ENCODE measurements at regions of chr16 and their contacts with region 1.

Region 1: GRCh38 chr16:2838928-2839327 is 8.8 kb downstream of the ZG16B start:
- DNase-seq: peak; percentile 48
- H3K4me3 Mint-ChIP-seq: no peak overlapping the region
- H3K27ac Mint-ChIP-seq: no peak overlapping the region
- H3K4me1 Mint-ChIP-seq: peaks cover 20% of the 10 kb centered on the region
- H3K27me3 Mint-ChIP-seq: peaks cover 3% of the 10 kb centered on the region

Region 2: DNA sequence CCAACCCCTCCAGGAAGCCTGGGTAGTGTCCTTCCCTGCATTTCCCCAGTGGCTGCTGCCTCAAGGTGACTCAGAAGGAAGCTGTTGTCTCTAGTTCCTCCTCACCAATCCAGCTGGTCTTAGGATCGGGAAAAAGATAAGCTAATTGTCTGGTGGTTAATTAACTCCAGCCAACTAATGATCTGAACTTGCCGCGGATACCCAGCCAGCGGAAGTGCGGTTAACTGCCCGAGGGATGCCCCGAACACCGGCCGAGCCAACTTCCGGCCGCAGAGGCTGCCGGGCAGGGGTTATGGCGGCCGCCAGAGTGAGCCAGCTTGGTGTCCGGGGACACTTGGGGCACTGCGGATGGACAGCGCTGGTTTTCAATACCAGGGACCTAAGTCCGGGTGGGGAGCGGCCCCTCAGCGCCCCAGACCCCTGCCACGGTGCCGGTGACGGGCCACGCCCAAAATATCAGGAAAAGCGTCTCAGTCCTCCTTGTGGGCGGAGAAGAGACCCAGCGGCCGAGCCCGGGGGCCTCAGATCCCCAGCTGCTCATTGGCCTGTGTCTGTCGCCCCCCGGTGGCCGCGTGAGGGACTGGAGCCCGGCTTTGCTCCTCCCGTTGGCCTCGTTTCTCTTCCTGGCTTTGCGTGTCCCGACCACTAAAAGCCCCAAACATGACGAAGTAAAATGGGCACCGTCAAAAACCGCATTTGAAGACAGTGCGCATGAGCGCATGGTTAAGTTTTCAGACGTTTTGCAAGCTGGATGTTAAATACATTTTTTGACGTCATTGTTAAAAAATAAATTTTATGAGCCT is 29.3 kb after region 1 on chr16:
- intact Hi-C with region 1: loop called (anchors 1 kb)
- DNase-seq: peak; percentile 90
- H3K4me3 Mint-ChIP-seq: peak overlapping the region; percentile 91
- H3K27ac Mint-ChIP-seq: peak overlapping the region; percentile 90
- H3K4me1 Mint-ChIP-seq: peaks cover 10% of the 10 kb centered on the region
- H3K27me3 Mint-ChIP-seq: no peaks in the 10 kb centered on the region

Region 3: DNA sequence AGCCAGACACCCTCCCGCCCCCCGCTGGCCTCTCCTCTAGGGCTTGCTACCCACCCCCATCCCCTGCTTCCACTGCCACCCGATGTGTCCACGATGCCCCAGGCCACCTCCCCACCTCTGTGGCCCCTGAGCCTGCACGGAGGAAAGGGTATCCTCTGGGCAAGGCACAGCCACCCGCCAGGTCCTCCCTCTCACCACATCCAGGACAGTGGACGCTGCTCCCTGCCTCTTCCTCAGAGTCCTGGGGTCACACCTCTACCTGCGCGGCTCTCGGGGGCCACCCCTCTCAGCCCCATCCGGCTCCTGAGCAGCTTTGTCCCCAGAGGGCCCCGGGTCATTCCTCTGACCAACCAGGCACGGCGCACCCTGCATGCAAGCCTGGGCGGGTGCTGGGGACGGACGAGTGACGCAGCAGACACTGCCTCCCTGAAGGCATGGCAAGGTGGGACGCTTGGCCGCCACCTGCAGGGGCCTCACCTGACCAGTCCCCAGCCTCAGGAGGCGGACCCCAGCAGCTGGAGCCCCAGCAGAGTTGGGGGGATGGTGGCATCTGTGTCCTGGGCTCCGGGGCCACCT is 97.6 kb after region 1 on chr16:
- intact Hi-C with region 1: no loop called
- DNase-seq: no peak
- H3K4me3 Mint-ChIP-seq: no peak overlapping the region
- H3K27ac Mint-ChIP-seq: no peak overlapping the region
- H3K4me1 Mint-ChIP-seq: peaks cover 9% of the 10 kb centered on the region
- H3K27me3 Mint-ChIP-seq: no peaks in the 10 kb centered on the region

Region 4: DNA sequence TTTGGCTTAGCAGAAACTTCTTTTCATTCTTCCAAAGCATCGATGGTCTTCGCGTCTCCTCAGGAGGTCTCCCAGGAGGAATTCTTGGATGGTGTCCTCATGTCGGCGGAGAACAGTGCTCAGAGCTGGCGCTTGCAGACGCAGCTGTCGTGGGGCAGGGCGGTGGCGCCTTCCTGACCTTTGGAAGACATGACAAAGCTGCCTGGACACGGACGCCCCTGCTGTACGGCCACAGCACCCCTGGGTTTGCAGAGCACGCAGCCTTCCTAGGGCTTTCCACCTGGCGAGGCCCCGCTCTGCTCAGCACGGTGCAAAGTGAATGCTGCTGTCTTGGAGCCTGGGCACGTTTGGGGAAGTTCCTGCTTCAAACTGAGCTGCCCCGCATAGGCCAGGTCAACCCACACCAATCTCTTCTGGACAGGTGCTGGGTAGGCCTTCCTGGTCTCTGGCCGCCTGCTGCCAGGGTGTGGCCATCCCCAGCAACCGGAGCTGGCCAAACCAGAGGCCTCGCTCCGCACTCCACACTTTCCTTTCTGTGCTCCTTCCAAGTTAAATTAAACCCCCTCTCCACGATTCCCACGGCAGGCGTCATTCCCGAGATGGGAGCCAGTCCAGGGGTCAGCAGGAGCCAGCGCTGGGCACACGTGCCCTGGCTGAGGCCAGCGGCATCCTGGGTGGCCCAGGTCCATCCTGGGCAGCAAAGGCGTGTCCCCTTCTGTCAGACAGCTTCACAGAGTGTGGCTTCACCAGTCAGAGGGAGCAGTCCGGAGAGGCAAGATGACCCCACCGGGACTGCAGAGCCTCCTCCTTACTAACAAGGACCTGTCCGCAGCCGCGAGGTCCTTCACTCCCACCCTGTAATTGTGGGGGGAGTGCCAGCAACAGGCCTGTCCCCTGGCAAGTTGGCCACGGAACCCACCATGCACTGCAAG is 110.1 kb after region 1 on chr16:
- intact Hi-C with region 1: no loop called
- DNase-seq: no peak
- H3K4me3 Mint-ChIP-seq: no peak overlapping the region
- H3K27ac Mint-ChIP-seq: no peak overlapping the region
- H3K4me1 Mint-ChIP-seq: no peaks in the 10 kb centered on the region
- H3K27me3 Mint-ChIP-seq: no peaks in the 10 kb centered on the region